Caco-2 (cell line): ENCODE measurements at regions of chr17 and their contacts with region 1.

Region 1: GRCh38 chr17:29807520-29808351 is 122.3 kb downstream of the SSH2 start:
- DNase-seq: peak; percentile 70 to 80
- H3K4me3 ChIP-seq: no peak overlapping the region
- H3K4me3 Mint-ChIP-seq: no peak overlapping the region
- H3K27ac Mint-ChIP-seq: no peak overlapping the region
- H3K4me1 ChIP-seq: no peaks in the 10 kb centered on the region
- H3K4me1 Mint-ChIP-seq: no peaks in the 10 kb centered on the region
- H3K27me3 ChIP-seq: no peaks in the 10 kb centered on the region
- H3K27me3 Mint-ChIP-seq: no peaks in the 10 kb centered on the region
- CTCF ChIP-seq: peak; percentile 85 to 87

Region 2: GRCh38 chr17:29212681-29213121 is 595.0 kb before region 1 on chr17:
- CTCF ChIA-PET with region 1: no interaction called
- POLR2A ChIA-PET with region 1: no interaction called
- intact Hi-C with region 1: no loop called
- DNase-seq: no peak
- H3K4me3 ChIP-seq: no peak overlapping the region
- H3K4me3 Mint-ChIP-seq: no peak overlapping the region
- H3K27ac Mint-ChIP-seq: no peak overlapping the region
- H3K4me1 ChIP-seq: no peaks in the 10 kb centered on the region
- H3K4me1 Mint-ChIP-seq: no peaks in the 10 kb centered on the region
- H3K27me3 ChIP-seq: no peaks in the 10 kb centered on the region
- H3K27me3 Mint-ChIP-seq: no peaks in the 10 kb centered on the region
- CTCF ChIP-seq: no peak

Region 3: DNA sequence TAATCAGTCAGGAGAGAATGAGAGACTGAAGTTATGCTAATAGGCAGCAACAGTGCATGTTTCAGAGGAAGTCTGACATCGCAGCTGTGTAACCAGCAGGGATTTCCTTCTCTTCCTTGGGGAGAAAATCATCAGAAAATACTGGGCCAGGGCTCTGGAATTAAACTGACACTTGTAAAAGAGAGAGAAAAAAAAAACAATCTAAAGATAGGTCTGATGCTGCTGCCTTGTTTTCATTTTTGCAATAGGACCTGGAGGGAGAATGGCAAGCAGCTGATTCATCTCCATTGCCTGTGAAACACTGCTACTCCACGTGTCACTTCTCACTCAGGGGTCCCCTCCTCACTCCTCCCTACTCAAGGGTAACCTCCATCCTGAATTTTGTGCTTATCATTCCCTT is 167.3 kb before region 1 on chr17:
- CTCF ChIA-PET with region 1: interaction called, 19 read pairs
- POLR2A ChIA-PET with region 1: interaction called, 3 read pairs
- intact Hi-C with region 1: no loop called
- DNase-seq: no peak
- H3K4me3 ChIP-seq: no peak overlapping the region
- H3K4me3 Mint-ChIP-seq: no peak overlapping the region
- H3K27ac Mint-ChIP-seq: peak overlapping the region; percentile 7
- H3K4me1 ChIP-seq: peaks cover 13% of the 10 kb centered on the region
- H3K4me1 Mint-ChIP-seq: no peaks in the 10 kb centered on the region
- H3K27me3 ChIP-seq: no peaks in the 10 kb centered on the region
- H3K27me3 Mint-ChIP-seq: no peaks in the 10 kb centered on the region
- CTCF ChIP-seq: no peak

Region 4: GRCh38 chr17:30021708-30022317 is 214.1 kb after region 1 on chr17:
- CTCF ChIA-PET with region 1: interaction called, 8 read pairs
- POLR2A ChIA-PET with region 1: no interaction called
- intact Hi-C with region 1: loop called (anchors 2 kb)
- DNase-seq: peak in 1 of 2 experiments; percentile 50
- H3K4me3 ChIP-seq: no peak overlapping the region
- H3K4me3 Mint-ChIP-seq: no peak overlapping the region
- H3K27ac Mint-ChIP-seq: no peak overlapping the region
- H3K4me1 ChIP-seq: no peaks in the 10 kb centered on the region
- H3K4me1 Mint-ChIP-seq: no peaks in the 10 kb centered on the region
- H3K27me3 ChIP-seq: no peaks in the 10 kb centered on the region
- H3K27me3 Mint-ChIP-seq: peaks cover 7% of the 10 kb centered on the region
- CTCF ChIP-seq: peak; percentile 60 to 85